ENCODE measurements at regions of chr14 and their contacts with region 1.

Region 1: DNA sequence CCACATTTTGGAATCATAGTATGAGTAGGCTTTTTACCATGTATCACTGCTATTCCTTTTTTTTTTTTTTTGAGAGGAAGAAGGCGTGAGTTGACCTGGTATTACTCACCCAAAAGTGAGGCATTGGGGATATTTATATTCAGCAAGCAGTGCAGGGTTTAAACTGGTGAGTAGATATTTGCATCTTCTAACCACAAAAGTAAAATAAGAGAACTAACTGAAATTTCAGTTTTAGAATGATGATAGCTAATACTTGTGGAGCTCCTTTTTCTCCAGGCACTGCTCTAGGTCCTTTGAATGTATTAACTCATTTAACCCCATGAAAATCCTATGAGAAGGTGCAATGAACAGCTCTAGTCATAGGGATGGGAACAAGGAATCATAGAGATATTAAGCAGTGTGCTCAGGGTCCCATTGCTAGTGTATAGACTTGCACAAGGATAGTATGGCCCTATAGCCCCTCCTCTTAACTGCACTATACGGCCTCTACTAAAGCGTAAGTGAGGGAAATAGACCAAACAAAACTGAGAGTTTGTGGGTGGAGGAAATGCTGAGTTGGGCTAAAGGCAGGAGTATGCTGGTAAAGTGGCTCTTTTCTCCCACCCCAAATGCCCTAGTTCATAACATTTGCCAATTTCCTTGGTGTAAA is 104.3 kb upstream of the MAX start:
- DNase-seq: peak; percentile 35
- H3K4me3 Mint-ChIP-seq: peak overlapping the region; percentile 54
- H3K27ac Mint-ChIP-seq: peak overlapping the region; percentile 82
- H3K4me1 Mint-ChIP-seq: peaks cover 61% of the 10 kb centered on the region
- H3K27me3 Mint-ChIP-seq: peaks cover 2% of the 10 kb centered on the region

Region 2: DNA sequence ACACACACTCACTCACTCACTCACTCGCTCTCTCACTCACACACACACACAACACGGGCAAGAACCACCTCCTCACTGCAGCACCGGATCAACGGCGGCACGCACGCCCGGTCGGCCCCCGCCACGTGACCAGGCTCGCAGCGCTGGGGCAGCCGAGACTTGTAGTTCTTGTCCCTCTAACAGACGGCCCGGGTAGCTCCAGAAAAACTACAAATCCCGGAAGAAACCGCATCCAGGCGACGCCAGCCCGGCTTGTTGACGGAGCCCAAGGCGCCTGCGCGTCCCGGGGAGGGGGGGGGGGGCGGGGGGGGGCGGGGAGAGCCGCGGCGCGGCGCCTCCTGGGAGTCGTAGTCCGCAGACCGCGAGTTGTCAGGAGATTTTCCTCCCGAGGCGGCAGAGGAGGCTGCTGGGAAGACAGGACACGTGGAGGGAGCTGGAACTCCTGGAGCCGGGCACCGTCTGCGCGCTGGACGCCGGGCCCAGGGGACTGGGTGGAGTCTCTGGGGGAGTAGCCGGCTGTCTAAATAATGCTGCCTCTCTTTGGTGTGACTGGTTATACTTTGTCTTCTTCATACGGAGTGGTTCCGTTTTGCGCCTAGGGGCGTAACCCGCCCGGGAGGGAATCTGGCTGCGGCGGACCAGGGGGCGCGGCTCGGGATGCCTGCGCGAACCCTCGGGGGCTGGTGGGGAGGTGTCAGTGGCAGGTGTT is 104.0 kb before region 1 on chr14 and contains the start of gene MAX:
- CTCF ChIA-PET with region 1: interaction called, 4 read pairs
- POLR2A ChIA-PET with region 1: no interaction called
- intact Hi-C with region 1: loop called (anchors 2 kb)
- DNase-seq: peak; percentile 99
- H3K4me3 Mint-ChIP-seq: peak within 1 kb of the TSS; percentile 96
- H3K27ac Mint-ChIP-seq: peak within 1 kb of the TSS; percentile 93
- H3K4me1 Mint-ChIP-seq: peaks cover 34% of the 10 kb centered on the region
- H3K27me3 Mint-ChIP-seq: no peaks in the 10 kb centered on the region
- total RNA-seq, gene MAX: 74.5 to 80.7 TPM

Region 3: DNA sequence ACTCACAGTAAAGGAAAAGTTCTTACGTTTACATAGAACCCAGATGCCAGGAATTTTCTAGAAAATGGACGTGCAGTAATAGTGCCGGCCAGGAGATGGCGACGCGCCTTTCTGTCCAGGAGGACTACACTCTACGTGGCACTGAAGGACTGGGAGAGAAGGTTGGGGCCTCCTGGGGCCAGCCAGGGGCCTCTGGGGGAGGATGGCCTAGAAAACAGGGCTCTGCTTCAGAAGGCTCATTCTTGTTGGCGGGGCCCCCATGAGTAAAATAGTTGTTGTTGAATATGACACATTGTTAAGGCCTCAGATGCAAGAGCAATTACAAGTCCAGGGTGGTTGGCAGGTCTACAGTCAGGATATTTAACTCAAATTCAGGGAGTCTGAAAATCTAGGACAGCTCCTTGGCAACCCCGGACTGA is 15.9 kb after region 1 on chr14:
- CTCF ChIA-PET with region 1: interaction called, 3 read pairs
- POLR2A ChIA-PET with region 1: interaction called, 4 read pairs
- intact Hi-C with region 1: loop called (anchors 2 kb)
- DNase-seq: peak; percentile 78
- H3K4me3 Mint-ChIP-seq: no peak overlapping the region
- H3K27ac Mint-ChIP-seq: peak overlapping the region; percentile 45
- H3K4me1 Mint-ChIP-seq: peaks cover 33% of the 10 kb centered on the region
- H3K27me3 Mint-ChIP-seq: no peaks in the 10 kb centered on the region

Region 4: DNA sequence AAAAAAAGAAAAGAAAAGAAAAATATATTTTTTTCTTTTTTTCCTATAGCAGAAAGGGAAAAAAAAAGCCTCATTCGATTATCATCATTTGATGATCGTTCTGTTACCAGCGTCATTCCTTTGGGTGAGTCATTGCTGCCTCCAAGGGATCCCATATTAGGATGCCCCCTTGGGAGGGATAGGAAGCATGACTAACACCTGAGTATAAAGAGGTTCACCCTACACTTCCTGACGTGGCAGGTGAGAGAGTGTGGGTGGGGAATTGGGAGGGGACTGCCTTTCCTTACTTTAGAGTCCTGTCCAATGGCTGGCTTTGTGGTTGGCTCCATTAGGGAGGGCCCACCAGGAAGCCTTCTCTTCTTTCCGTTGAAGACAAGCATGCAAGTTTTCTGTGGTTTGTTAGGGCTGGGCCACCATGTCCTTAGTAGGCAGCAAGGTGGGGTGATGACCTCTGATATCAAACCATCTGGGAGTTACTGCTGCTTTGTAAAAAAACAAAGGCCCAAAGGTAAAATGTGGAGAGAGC is 149.8 kb after region 1 on chr14:
- CTCF ChIA-PET with region 1: no interaction called
- POLR2A ChIA-PET with region 1: interaction called, 3 read pairs
- intact Hi-C with region 1: loop called (anchors 5 kb)
- DNase-seq: peak; percentile 70
- H3K4me3 Mint-ChIP-seq: no peak overlapping the region
- H3K27ac Mint-ChIP-seq: peak overlapping the region; percentile 57
- H3K4me1 Mint-ChIP-seq: peaks cover 43% of the 10 kb centered on the region
- H3K27me3 Mint-ChIP-seq: no peaks in the 10 kb centered on the region

Region 5: DNA sequence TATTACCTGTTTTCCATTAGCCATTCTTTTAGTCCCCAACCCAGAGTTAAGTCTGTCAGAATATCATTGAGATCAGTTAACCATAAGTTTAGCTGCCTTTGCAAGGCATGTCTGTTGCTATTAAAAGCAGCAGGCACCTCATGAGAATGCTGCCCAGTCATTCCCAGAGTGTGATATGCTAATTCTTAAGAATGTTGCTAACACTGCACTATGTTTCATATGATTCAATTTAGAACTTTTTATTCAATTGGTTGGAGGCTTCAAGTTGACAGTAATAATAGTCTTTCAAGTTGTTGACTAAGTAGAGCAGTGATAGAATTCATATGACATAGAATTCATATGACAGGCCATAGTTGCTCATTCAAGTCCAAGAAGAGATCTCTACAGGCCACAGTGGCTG is 498.3 kb after region 1 on chr14:
- CTCF ChIA-PET with region 1: no interaction called
- POLR2A ChIA-PET with region 1: no interaction called
- intact Hi-C with region 1: loop called (anchors 1 kb)
- DNase-seq: peak; percentile 66
- H3K4me3 Mint-ChIP-seq: no peak overlapping the region
- H3K27ac Mint-ChIP-seq: peak overlapping the region; percentile 64
- H3K4me1 Mint-ChIP-seq: peaks cover 31% of the 10 kb centered on the region
- H3K27me3 Mint-ChIP-seq: no peaks in the 10 kb centered on the region

Region 6: GRCh38 chr14:65927931-65928356 is 721.4 kb after region 1 on chr14:
- CTCF ChIA-PET with region 1: no interaction called
- POLR2A ChIA-PET with region 1: no interaction called
- intact Hi-C with region 1: loop called (anchors 2 kb)
- DNase-seq: peak; percentile 92
- H3K4me3 Mint-ChIP-seq: peak overlapping the region; percentile 18
- H3K27ac Mint-ChIP-seq: peak overlapping the region; percentile 43
- H3K4me1 Mint-ChIP-seq: peaks cover 51% of the 10 kb centered on the region
- H3K27me3 Mint-ChIP-seq: peaks cover 2% of the 10 kb centered on the region

Measured in activated CD4-positive, alpha-beta memory T cell treated with anti-CD3 and anti-CD28 coated beads for 36 hours (primary cell).